K562 (cell line): ENCODE measurements at regions of chr1 and their contacts with region 1.

Region 1: GRCh38 chr1:161225534-161226319 is at the start of gene TOMM40L:
- DNase-seq: peak; percentile 93 to 98 (median 95)
- ATAC-seq: peak; percentile 95
- H3K4me3 ChIP-seq: peak within 1 kb of the TSS; percentile 70
- H3K27ac ChIP-seq: peak within 1 kb of the TSS; percentile 79
- H3K4me1 ChIP-seq: peaks cover 15 to 17% of the 10 kb centered on the region in 2 experiments; a peak in 3 of 5 replicates
- H3K27me3 ChIP-seq: no peaks in the 10 kb centered on the region
- CTCF ChIP-seq: peak; percentile 72 to 88 (median 84)
- EP300 ChIP-seq: no peak
- POLR2A ChIP-seq: peak; percentile 87
- RAD21 ChIP-seq: peak; percentile 65 to 82
- polyA plus RNA-seq, gene TOMM40L: 9.6 to 12.9 TPM

Region 2: GRCh38 chr1:161177112-161177935 is 48.4 kb before region 1 on chr1 and contains the start of gene B4GALT3:
- CTCF ChIA-PET with region 1: no interaction called
- POLR2A ChIA-PET with region 1: interaction called, 3 read pairs
- in situ Hi-C with region 1: no loop called
- intact Hi-C with region 1: loop called (anchors 1 kb)
- DNase-seq: peak; percentile 91 to 98 (median 98)
- ATAC-seq: peak; percentile 94
- H3K4me3 ChIP-seq: peak within 1 kb of the TSS; percentile 90
- H3K27ac ChIP-seq: peak within 1 kb of the TSS; percentile 96
- H3K4me1 ChIP-seq: peaks cover 25 to 42% of the 10 kb centered on the region in 2 experiments; a peak in 4 of 5 replicates
- H3K27me3 ChIP-seq: no peaks in the 10 kb centered on the region
- CTCF ChIP-seq: peak; percentile 81 to 87 (median 82)
- EP300 ChIP-seq: peak; percentile 61
- POLR2A ChIP-seq: peak; percentile 95
- RAD21 ChIP-seq: peak; percentile 87 to 88
- polyA plus RNA-seq, gene B4GALT3: 46.1 to 103 TPM

Region 3: GRCh38 chr1:161209790-161210409 is 15.8 kb before region 1 on chr1:
- CTCF ChIA-PET with region 1: interaction called, 4 read pairs
- POLR2A ChIA-PET with region 1: interaction called, 8 read pairs
- in situ Hi-C with region 1: no loop called
- intact Hi-C with region 1: loop called (anchors 1 kb)
- DNase-seq: peak; percentile 86 to 89 (median 86)
- ATAC-seq: peak; percentile 99
- H3K4me3 ChIP-seq: no peak overlapping the region
- H3K27ac ChIP-seq: no peak overlapping the region
- H3K4me1 ChIP-seq: peaks cover 3 to 4% of the 10 kb centered on the region in 2 experiments; a peak in 1 of 5 replicates
- H3K27me3 ChIP-seq: no peaks in the 10 kb centered on the region
- CTCF ChIP-seq: peak; percentile 94 to 97 (median 96)
- EP300 ChIP-seq: no peak
- POLR2A ChIP-seq: no peak
- RAD21 ChIP-seq: peak; percentile 89 to 93

Region 4: GRCh38 chr1:161305867-161306519 is 80.3 kb after region 1 on chr1:
- CTCF ChIA-PET with region 1: interaction called, 3 read pairs
- POLR2A ChIA-PET with region 1: interaction called, 5 read pairs
- in situ Hi-C with region 1: no loop called
- intact Hi-C with region 1: loop called (anchors 2 kb)
- DNase-seq: peak; percentile 91 to 97 (median 95)
- ATAC-seq: peak; percentile 92
- H3K4me3 ChIP-seq: peak overlapping the region; percentile 61
- H3K27ac ChIP-seq: peak overlapping the region; percentile 70
- H3K4me1 ChIP-seq: peaks cover 28 to 33% of the 10 kb centered on the region in 2 experiments
- H3K27me3 ChIP-seq: no peaks in the 10 kb centered on the region
- CTCF ChIP-seq: peak; percentile 56 to 74 (median 61); a peak in 5 of 6 replicates
- EP300 ChIP-seq: no peak; the same call in 1 of the 2 replicates
- POLR2A ChIP-seq: peak; percentile 69
- RAD21 ChIP-seq: peak; percentile 34 to 47; a peak in 3 of 4 replicates

Region 5: DNA sequence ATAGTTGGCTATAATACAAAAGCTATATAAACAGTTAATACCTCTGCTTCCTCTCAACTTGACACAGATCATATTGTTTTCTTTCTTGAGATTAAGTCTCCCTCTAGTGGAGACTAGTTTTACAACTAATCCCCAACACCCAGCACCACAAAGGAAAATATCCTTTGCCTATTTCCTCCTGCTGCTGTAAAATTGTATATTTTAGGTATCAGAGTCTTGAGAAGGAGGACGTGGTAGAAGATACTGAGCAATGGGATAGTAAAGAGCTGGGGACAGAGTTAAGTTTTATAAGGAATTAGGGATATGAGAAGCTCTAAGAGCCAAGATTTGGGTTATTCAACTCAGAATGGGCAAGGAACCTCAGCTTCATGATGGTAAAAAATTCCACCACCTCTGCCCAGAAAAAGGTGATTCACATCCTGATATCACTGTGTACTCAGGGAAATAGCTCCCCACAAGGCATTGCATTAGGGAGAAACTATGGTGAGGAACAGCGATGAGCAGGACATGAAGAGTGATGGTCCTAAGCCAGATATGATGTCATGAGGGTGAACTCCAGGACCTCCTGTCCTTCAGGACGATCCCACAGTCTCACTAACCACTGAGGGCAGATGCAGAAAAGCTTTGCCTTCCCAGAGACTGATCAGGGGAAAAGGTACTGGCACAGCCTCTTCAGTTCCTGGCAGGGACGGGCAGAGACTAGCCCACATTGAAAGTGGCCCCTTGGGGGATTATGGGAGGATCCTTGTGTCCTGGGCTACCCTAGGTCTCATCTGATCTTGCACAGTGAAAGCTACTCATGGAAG is 156.7 kb after region 1 on chr1:
- CTCF ChIA-PET with region 1: interaction called, 6 read pairs
- POLR2A ChIA-PET with region 1: interaction called, 4 read pairs
- in situ Hi-C with region 1: loop called (anchors 5 kb)
- intact Hi-C with region 1: loop called (anchors 2 kb)
- DNase-seq: peak; percentile 28 to 70 (median 41)
- ATAC-seq: peak; percentile 93
- H3K4me3 ChIP-seq: no peak overlapping the region
- H3K27ac ChIP-seq: no peak overlapping the region
- H3K4me1 ChIP-seq: peaks cover 0 to 6% of the 10 kb centered on the region in 2 experiments; a peak in 3 of 5 replicates
- H3K27me3 ChIP-seq: no peaks in the 10 kb centered on the region
- CTCF ChIP-seq: peak; percentile 55 to 78 (median 58); a peak in 5 of 6 replicates
- EP300 ChIP-seq: no peak
- POLR2A ChIP-seq: no peak
- RAD21 ChIP-seq: peak; percentile 75 to 84

Region 6: DNA sequence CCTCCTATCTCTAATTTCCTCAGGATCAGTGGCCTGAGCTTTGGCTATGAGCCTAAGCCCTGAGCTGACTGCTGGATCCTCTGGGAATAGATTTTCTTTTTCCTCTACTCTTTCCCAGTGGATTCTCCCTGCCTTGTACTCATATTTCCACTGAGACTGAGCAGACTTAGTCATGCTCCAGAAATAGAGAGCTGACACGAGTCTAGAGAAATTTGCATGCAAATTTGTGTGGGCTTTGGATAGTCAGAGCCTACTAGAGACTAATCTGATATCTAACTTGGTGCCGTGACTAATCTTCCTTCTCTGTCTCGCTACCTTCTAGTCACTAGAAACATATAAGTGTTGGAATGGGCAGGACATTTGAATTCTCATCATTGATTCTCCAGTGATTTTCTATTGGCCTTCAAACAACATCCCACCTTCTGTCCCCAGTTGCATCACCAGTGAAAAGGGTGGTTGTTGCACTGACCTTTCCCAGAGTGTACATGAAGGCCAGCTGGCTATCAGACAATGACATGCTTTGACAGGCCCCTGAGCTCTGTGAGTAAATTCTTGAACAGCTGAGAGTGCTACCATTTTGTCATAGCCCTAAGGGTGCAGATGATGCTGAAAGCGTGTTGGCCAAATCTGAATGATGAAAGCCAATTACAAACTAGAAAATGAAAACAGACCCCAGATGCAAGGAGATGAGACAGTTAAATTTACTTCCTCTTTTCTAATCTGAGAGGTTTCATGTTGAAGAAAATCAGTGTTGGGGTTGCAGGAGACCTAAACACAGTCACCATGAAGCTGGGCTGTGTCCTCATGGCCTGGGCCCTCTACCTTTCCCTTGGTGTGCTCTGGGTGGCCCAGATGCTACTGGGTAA is 481.0 kb after region 1 on chr1 and contains the start of gene FCRLA:
- CTCF ChIA-PET with region 1: no interaction called
- POLR2A ChIA-PET with region 1: no interaction called
- in situ Hi-C with region 1: no loop called
- intact Hi-C with region 1: no loop called
- DNase-seq: peak in 1 of 4 experiments; percentile 55
- ATAC-seq: peak; percentile 76
- H3K4me3 ChIP-seq: no peak within 1 kb of the TSS
- H3K27ac ChIP-seq: peak within 1 kb of the TSS; percentile 48; the same call in 2 of the 3 replicates
- H3K4me1 ChIP-seq: peaks cover under 1 to 28% of the 10 kb centered on the region in 2 experiments
- H3K27me3 ChIP-seq: no peaks in the 10 kb centered on the region
- CTCF ChIP-seq: no peak
- EP300 ChIP-seq: 0 out of 2 replicates have a peak, but pooled peaks have one; percentile 16
- POLR2A ChIP-seq: no peak
- RAD21 ChIP-seq: no peak
- polyA plus RNA-seq, gene FCRLA: 0.44 to 0.84 TPM